ENCODE measurements at regions of chr17 and their contacts with region 1.

Region 1: GRCh38 chr17:30336369-30337171 is 2.7 kb upstream of the TMIGD1 start:
- H3K4me3 Mint-ChIP-seq: no peak overlapping the region
- H3K27ac Mint-ChIP-seq: peak overlapping the region; percentile 36
- H3K4me1 Mint-ChIP-seq: peaks cover 25% of the 10 kb centered on the region
- H3K27me3 Mint-ChIP-seq: no peaks in the 10 kb centered on the region

Region 2: DNA sequence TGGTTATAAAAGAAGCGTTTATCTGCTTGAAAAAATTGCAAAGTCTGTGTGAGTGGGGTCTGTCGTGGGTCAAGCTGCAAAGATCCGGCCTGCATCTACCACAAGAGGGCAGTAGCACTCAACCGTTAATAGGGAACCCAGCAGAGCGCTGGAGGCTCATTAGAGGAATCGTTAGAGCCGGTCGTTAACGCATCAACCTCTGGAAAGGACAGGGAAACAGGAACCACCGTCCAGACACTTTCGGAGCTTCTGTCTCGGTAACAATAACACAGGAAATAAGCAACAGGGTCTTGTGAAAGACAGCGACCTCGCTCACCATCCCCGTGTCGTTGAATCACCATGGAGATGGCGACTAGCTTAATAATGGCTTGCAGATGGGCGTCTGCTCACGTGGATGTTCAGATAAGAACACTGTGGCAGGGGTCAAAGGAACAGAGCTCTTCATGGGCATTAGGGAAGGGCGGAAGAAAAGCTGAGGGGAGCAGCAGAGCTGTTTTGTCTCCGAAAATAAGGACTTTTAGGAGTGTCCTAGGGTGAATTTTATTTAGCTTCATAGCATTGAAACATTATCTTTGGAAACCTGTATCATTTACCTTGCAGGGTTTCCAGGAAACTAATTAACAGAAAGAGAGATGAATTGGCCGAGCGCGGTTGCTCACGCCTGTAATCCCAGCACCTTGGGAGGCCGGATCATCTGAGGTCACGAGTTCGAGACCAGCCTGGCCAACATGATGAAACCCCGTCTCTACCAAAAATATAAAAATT is 231.8 kb before region 1 on chr17:
- intact Hi-C with region 1: loop called (anchors 1 kb)
- H3K4me3 Mint-ChIP-seq: peak overlapping the region; percentile 77
- H3K27ac Mint-ChIP-seq: peak overlapping the region; percentile 90
- H3K4me1 Mint-ChIP-seq: peaks cover 12% of the 10 kb centered on the region
- H3K27me3 Mint-ChIP-seq: no peaks in the 10 kb centered on the region

Region 3: DNA sequence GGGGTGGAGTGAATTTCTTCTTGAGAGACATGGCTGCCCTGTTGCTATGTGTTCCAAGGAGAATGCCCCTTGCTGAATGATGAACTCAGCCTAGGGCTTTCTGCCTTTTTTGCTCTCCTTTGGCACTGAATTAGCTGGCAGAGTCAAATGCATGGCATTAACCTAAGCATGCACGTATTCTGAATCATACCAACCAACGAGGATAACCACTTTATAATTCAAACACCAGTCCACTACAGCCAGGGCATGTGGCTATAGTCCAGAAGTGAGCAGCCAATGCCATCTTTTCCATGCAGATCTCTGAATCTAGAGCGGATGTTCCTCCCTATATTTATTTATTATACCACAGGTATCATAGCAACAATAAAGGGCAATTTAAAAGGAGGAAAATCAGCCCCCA is 18.4 kb before region 1 on chr17:
- intact Hi-C with region 1: no loop called
- H3K4me3 Mint-ChIP-seq: no peak overlapping the region
- H3K27ac Mint-ChIP-seq: no peak overlapping the region
- H3K4me1 Mint-ChIP-seq: peaks cover 13% of the 10 kb centered on the region
- H3K27me3 Mint-ChIP-seq: no peaks in the 10 kb centered on the region

Region 4: DNA sequence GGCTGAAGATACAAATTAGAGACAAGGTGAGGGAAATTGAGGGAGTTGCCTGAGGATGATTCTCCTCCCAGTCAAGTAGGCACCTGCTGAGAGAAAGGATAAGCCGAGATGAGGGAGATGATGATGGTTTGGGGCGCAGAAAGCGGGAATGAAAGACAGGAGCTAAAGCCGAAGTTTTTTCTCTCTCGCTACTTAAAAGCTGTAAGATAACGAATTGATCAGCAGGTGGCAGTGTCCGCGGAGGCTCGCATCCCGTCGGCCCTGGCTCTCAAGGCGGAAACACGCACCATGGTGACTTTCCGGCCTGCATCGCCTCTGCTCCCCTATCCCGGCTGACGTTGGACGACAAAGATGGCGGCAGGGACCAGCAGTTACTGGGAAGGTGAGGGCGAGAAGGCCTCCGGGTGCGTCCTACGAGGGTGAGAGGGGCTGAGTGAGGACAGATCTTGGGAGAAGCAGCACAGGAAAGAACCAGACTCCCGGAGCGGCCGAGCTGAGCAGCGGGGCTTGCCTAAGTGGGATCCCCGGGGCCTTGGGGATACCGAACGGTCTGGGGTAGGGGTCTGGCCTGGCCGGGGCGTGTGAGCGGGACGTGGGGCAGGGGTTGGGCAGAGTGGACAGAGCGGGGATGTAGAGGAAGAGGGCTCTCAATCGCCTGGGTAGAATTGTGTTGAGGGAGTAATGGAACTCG is 140.7 kb after region 1 on chr17 and contains the start of gene GOSR1:
- intact Hi-C with region 1: no loop called
- H3K4me3 Mint-ChIP-seq: peak within 1 kb of the TSS; percentile 88
- H3K27ac Mint-ChIP-seq: peak within 1 kb of the TSS; percentile 99
- H3K4me1 Mint-ChIP-seq: peaks cover 7% of the 10 kb centered on the region
- H3K27me3 Mint-ChIP-seq: no peaks in the 10 kb centered on the region